Activated B cell treated with CpG ODN at 0.5 μM for 24 hours (primary cell): ENCODE measurements at regions of chr12 and their contacts with region 1.

Region 1: DNA sequence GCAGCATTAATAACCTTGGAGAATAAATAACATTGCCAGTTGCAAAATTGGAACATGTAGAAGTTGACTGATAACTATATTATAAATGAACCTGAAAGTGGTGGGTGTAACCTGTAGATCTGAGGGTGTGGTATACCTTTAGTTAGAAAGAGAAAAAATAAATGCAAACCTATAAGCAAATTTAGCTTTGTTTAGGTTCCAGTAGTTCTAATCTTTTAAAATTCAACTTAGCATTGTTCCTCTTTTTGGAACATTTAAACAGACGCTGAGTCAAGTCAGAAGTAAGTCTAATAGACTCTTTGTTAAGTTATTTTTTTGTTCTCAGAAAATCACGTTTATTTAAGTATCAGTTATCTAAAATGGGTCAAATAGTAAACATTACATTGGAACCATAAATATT is 120.0 kb downstream of the DNAI7 start:
- DNase-seq: no peak
- ATAC-seq: peak; percentile 40
- H3K4me3 Mint-ChIP-seq: peak overlapping the region; percentile 22
- H3K27ac Mint-ChIP-seq: peak overlapping the region; percentile 61
- H3K4me1 Mint-ChIP-seq: peaks cover 62% of the 10 kb centered on the region
- H3K27me3 Mint-ChIP-seq: no peaks in the 10 kb centered on the region
- CTCF ChIP-seq: no peak

Region 2: GRCh38 chr12:24728366-24728765 is 346.6 kb before region 1 on chr12:
- CTCF ChIA-PET with region 1: no interaction called
- POLR2A ChIA-PET with region 1: no interaction called
- intact Hi-C with region 1: no loop called
- DNase-seq: no peak
- ATAC-seq: peak; percentile 26
- H3K4me3 Mint-ChIP-seq: no peak overlapping the region
- H3K27ac Mint-ChIP-seq: peak overlapping the region; percentile 85
- H3K4me1 Mint-ChIP-seq: peaks cover 98% of the 10 kb centered on the region
- H3K27me3 Mint-ChIP-seq: no peaks in the 10 kb centered on the region
- CTCF ChIP-seq: no peak

Region 3: DNA sequence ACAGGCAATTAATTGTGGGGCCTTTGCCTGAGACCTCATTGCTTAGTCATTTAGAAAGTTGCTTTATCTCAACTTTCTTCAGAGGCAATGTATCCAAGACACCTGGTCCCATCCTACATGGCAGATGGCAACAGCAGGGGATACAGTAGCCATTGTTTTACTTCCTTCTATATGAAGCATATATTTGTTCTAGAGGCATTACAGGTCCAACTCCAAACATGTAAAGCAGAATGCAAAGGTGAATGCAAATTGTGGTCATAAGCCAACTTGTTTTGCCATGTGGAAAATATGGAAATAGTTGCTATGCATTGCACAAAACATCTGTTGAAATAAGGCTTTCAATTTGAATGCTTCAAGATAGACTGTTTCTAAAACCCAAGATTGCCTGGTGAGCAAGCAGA is 16.3 kb before region 1 on chr12:
- CTCF ChIA-PET with region 1: interaction called, 5 read pairs
- POLR2A ChIA-PET with region 1: interaction called, 61 read pairs
- intact Hi-C with region 1: loop called (anchors 1 kb)
- DNase-seq: no peak
- ATAC-seq: peak; percentile 43
- H3K4me3 Mint-ChIP-seq: peak overlapping the region; percentile 70
- H3K27ac Mint-ChIP-seq: peak overlapping the region; percentile 95
- H3K4me1 Mint-ChIP-seq: peaks cover 85% of the 10 kb centered on the region
- H3K27me3 Mint-ChIP-seq: no peaks in the 10 kb centered on the region
- CTCF ChIP-seq: no peak

Region 4: GRCh38 chr12:25107920-25108319 is 33.0 kb after region 1 on chr12:
- CTCF ChIA-PET with region 1: no interaction called
- POLR2A ChIA-PET with region 1: interaction called, 3 read pairs
- intact Hi-C with region 1: loop called (anchors 2 kb)
- DNase-seq: peak; percentile 17
- ATAC-seq: peak; percentile 84
- H3K4me3 Mint-ChIP-seq: peak overlapping the region; percentile 47
- H3K27ac Mint-ChIP-seq: peak overlapping the region; percentile 88
- H3K4me1 Mint-ChIP-seq: peaks cover 20% of the 10 kb centered on the region
- H3K27me3 Mint-ChIP-seq: no peaks in the 10 kb centered on the region
- CTCF ChIP-seq: no peak